ENCODE measurements at regions of chr3 and their contacts with region 1.

Region 1: DNA sequence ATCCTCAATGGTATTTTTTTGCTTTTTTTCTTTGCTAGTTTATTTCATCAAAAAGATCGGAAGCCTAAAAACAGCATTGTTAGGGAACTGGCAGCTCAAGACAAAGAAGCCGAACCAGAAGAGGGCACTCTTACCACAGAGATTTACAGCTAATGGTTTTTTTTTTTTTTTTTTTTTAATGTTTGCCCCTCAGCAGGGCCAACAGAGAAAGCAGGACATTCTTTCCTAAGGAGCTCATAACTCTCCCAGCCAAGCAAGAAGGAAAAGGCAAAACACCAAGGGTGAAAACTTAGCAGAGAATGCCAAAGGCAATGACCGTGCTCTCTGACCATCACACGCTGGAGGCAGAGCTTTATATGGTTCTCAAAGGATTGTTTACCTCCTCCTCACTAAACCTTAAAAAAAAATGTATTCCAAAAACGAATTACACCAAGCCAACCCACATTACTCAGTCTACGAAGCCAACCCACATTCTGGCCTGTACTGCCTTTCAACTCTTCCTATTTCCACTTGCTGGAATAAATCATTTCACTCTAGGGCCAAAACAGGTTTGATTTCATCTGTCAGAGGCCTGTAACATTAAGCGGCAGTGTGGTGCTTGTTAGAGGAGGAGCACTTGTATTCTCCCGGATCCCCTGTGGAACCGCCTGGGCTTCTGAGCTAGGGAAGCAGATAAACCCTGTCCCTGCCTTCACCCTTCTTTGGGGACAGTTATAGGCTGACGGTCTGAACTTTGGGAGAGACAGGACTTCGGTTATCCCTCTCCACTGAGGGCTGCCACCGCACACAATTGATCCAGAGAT is 35.6 kb upstream of the GYG1 start:
- DNase-seq: peak; percentile 47
- ATAC-seq: peak; percentile 65
- H3K4me3 ChIP-seq: peak overlapping the region; percentile 2 to 57 (median 11); a peak in 3 of 6 replicates
- H3K27ac ChIP-seq: no peak overlapping the region
- H3K4me1 ChIP-seq: peaks cover 43% of the 10 kb centered on the region
- H3K27me3 ChIP-seq: peaks cover 0 to 3% of the 10 kb centered on the region in 2 experiments; a peak in 1 of 5 replicates
- CTCF ChIP-seq: peak; percentile 65
- EP300 ChIP-seq: no peak
- POLR2A ChIP-seq: no peak
- RAD21 ChIP-seq: no peak

Region 2: DNA sequence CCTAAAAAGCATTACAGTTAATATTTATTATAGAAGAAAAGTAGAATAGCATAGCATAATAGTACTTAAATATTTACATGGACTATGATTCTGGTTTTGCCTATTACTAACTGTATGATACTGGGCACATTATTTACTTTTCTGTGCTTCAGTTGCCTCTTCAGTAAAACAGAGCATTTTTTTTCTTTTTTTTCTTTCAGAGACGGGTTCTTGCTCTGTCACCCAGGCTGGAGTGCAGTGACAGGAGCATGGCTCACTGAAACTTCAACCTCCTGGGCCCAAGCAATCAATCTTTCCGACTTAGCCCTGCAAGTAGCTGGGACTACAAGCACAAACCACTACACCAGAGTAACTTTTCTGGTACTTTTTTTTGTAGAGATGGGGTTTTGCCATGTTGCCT is 82.6 kb after region 1 on chr3:
- CTCF ChIA-PET with region 1: no interaction called
- POLR2A ChIA-PET with region 1: no interaction called
- in situ Hi-C with region 1: no loop called
- intact Hi-C with region 1: loop called (anchors 10 kb)
- DNase-seq: no peak
- ATAC-seq: peak; percentile 50
- H3K4me3 ChIP-seq: no peak overlapping the region
- H3K27ac ChIP-seq: peak overlapping the region; percentile 83
- H3K4me1 ChIP-seq: peaks cover 40% of the 10 kb centered on the region
- H3K27me3 ChIP-seq: no peaks in the 10 kb centered on the region
- CTCF ChIP-seq: no peak
- EP300 ChIP-seq: no peak
- POLR2A ChIP-seq: no peak
- RAD21 ChIP-seq: no peak

Region 3: DNA sequence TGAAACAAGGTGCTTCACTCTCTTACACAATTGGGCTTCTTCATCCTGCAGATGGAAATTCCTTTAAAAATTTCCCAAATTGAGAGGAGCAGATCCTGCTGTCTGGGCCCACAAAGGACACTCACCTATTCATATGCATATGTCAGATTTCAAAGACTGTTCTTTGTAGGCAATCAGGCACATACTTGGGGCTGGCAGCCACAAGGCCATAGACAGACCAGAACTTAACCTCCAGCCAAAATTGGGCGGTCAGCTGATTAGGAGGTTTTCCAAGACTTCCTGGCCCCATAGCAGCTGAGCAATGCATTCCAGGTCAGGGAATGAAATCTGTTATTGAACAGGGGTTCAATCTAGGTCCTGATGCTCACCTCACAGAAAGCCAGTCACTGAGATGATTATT is 158.7 kb after region 1 on chr3:
- CTCF ChIA-PET with region 1: no interaction called
- POLR2A ChIA-PET with region 1: no interaction called
- in situ Hi-C with region 1: loop called (anchors 10 kb)
- intact Hi-C with region 1: no loop called
- DNase-seq: no peak
- ATAC-seq: no peak
- H3K4me3 ChIP-seq: no peak overlapping the region
- H3K27ac ChIP-seq: no peak overlapping the region
- H3K4me1 ChIP-seq: peaks cover 12% of the 10 kb centered on the region; the same call in 1 of the 2 replicates
- H3K27me3 ChIP-seq: peaks cover 2 to 10% of the 10 kb centered on the region in 2 experiments; a peak in 2 of 5 replicates
- CTCF ChIP-seq: no peak
- EP300 ChIP-seq: no peak
- POLR2A ChIP-seq: no peak
- RAD21 ChIP-seq: no peak

Region 4: GRCh38 chr3:149273096-149273751 is 317.5 kb after region 1 on chr3:
- CTCF ChIA-PET with region 1: interaction called, 16 read pairs
- POLR2A ChIA-PET with region 1: no interaction called
- in situ Hi-C with region 1: loop called (anchors 5 kb)
- intact Hi-C with region 1: loop called (anchors 1 kb)
- DNase-seq: peak; percentile 81
- ATAC-seq: peak; percentile 81
- H3K4me3 ChIP-seq: no peak overlapping the region
- H3K27ac ChIP-seq: no peak overlapping the region
- H3K4me1 ChIP-seq: peaks cover 44% of the 10 kb centered on the region
- H3K27me3 ChIP-seq: no peaks in the 10 kb centered on the region
- CTCF ChIP-seq: peak; percentile 96
- EP300 ChIP-seq: no peak
- POLR2A ChIP-seq: no peak
- RAD21 ChIP-seq: peak; percentile 96

Region 5: GRCh38 chr3:149473357-149474249 is 517.9 kb after region 1 on chr3:
- CTCF ChIA-PET with region 1: no interaction called
- POLR2A ChIA-PET with region 1: no interaction called
- in situ Hi-C with region 1: no loop called
- intact Hi-C with region 1: loop called (anchors 10 kb)
- DNase-seq: no peak
- ATAC-seq: no peak
- H3K4me3 ChIP-seq: no peak overlapping the region
- H3K27ac ChIP-seq: peak overlapping the region; percentile 40
- H3K4me1 ChIP-seq: peaks cover 37% of the 10 kb centered on the region
- H3K27me3 ChIP-seq: no peaks in the 10 kb centered on the region
- CTCF ChIP-seq: no peak
- EP300 ChIP-seq: no peak
- POLR2A ChIP-seq: no peak
- RAD21 ChIP-seq: no peak

Measured in HepG2 (cell line).